K562 (cell line): ENCODE measurements at regions of chr3 and their contacts with region 1.

Region 1: DNA sequence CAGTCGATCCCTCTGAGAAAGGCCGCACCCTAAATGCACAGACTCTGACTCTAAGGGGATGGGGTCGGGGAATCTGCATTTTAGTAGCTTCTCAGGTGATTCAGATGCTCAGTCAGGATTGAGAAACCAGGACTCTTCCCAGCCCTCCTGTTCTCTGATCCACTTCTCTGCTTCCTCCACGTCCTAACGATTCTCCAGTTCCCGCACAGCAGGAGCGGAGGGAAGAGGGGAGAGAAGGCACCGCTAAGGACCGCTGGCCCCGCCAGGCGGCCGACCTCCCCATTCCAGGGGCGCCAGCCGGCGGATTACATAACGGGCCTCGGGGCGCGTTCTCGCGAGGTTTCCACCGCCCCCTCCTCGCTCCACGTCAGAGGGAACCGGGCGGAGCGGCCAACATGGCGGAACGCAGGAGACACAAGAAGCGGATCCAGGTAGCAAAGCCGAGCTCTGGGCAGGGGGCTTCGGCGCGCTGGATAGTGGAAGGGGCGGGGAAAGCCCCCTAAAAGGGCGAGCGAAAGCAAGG is at the start of gene SEC62:
- DNase-seq: peak; percentile 93 to 96 (median 94)
- ATAC-seq: peak; percentile 92
- H3K4me3 ChIP-seq: peak within 1 kb of the TSS; percentile 69
- H3K27ac ChIP-seq: peak within 1 kb of the TSS; percentile 84
- H3K4me1 ChIP-seq: peaks cover 4 to 12% of the 10 kb centered on the region in 2 experiments; a peak in 4 of 5 replicates
- H3K27me3 ChIP-seq: no peaks in the 10 kb centered on the region
- CTCF ChIP-seq: peak; percentile 67 to 73 (median 73)
- EP300 ChIP-seq: no peak; the same call in 1 of the 2 replicates
- POLR2A ChIP-seq: peak; percentile 89
- RAD21 ChIP-seq: peak; percentile 82 to 91
- polyA plus RNA-seq, gene SEC62: 118 to 152 TPM

Region 2: GRCh38 chr3:169149349-169149890 is 817.1 kb before region 1 on chr3:
- CTCF ChIA-PET with region 1: no interaction called
- POLR2A ChIA-PET with region 1: no interaction called
- in situ Hi-C with region 1: loop called (anchors 25 kb)
- intact Hi-C with region 1: no loop called
- DNase-seq: peak; percentile 73 to 89 (median 78)
- ATAC-seq: peak; percentile 65
- H3K4me3 ChIP-seq: peak overlapping the region; percentile 23
- H3K27ac ChIP-seq: peak overlapping the region; percentile 89
- H3K4me1 ChIP-seq: peaks cover 6 to 15% of the 10 kb centered on the region in 2 experiments; a peak in 4 of 5 replicates
- H3K27me3 ChIP-seq: no peaks in the 10 kb centered on the region; a peak in 1 of 5 replicates
- CTCF ChIP-seq: peak; percentile 82 to 92 (median 90)
- EP300 ChIP-seq: peak; percentile 23; the same call in 1 of the 2 replicates
- POLR2A ChIP-seq: no peak; the same call in 1 of the 2 replicates
- RAD21 ChIP-seq: peak; percentile 80 to 81

Region 3: DNA sequence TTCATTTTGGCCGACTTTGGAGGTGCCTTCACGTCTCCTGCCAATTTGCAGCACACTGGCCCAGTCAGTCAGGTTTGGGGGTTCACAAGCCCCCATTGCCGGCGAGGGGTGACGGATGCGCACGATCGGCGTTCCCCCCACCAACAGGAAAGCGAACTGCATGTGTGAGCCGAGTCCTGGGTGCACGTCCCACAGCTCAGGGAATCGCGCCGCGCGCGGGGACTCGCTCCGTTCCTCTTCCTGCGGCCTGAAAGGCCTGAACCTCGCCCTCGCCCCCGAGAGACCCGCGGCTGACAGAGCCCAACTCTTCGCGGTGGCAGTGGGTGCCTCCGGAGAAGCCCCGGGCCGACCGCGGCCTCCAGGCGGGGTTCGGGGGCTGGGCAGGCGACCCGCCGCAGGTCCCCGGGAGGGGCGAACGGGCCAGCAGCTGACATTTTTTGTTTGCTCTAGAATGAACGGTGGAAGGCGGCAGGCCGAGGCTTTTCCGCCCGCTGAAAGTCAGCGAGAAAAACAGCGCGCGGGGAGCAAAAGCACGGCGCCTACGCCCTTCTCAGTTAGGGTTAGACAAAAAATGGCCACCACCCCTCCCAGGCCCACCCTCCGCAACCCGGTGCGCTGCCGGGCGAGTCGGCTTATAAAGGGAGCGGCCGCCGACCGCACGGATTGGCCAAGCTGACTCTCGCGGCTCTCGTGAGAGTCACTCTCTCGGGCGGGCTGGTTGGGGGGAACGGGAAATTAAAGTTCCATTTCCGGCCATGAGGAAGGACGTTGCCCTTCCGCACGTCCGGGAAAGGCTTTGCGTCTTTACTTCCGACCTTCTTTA is 201.8 kb before region 1 on chr3 and contains the start of gene TERC:
- CTCF ChIA-PET with region 1: no interaction called
- POLR2A ChIA-PET with region 1: no interaction called
- in situ Hi-C with region 1: no loop called
- intact Hi-C with region 1: loop called (anchors 5 kb)
- DNase-seq: peak; percentile 74 to 93 (median 82)
- ATAC-seq: peak; percentile 96
- H3K4me3 ChIP-seq: peak within 1 kb of the TSS; percentile 71
- H3K27ac ChIP-seq: peak within 1 kb of the TSS; percentile 95
- H3K4me1 ChIP-seq: peaks cover 6 to 20% of the 10 kb centered on the region in 2 experiments
- H3K27me3 ChIP-seq: no peaks in the 10 kb centered on the region
- CTCF ChIP-seq: no peak
- EP300 ChIP-seq: no peak
- POLR2A ChIP-seq: peak; percentile 96
- RAD21 ChIP-seq: peak in 1 of 2 experiments; percentile 14; a peak in 1 of 4 replicates
- polyA plus RNA-seq, gene TERC: not detected

Region 4: DNA sequence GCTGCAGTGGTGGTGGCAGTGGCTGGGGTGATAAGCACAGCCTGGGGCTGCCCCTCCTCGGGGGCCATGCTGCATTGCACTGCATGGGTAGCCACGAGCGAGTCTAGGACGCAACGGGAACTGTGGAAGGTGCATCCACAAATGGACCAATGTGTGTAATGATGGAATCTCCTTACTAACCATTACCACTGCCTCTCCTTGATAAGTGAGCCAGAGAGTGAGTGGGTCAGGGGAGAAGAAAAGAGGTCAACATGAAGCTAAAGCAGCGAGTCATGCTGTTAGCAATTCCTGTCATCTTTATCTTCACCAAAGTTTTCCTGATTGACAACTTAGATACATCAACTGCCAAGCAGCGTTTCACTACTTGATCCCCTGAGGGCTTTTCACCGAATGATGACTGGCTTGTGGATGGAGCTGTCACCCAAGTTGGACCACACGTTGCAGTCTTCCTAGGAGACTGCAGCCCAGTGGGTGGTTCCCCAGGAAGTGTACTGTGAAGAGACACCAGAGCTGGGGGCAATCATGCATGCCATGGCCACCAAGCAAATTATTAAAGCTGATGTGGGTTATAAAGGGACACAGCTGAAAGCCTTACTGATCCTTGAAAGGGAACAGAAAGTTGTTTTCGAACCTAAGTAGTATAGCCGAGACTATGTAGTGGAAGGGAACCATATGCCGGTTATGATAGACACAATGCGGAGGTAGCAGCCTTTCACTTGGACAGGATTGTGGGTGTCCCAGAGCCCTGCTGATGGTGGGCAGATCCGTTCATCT is 34.6 kb before region 1 on chr3:
- CTCF ChIA-PET with region 1: no interaction called
- POLR2A ChIA-PET with region 1: no interaction called
- in situ Hi-C with region 1: no loop called
- intact Hi-C with region 1: loop called (anchors 2 kb)
- DNase-seq: peak in 2 of 4 experiments; percentile 42 to 64
- ATAC-seq: peak; percentile 63
- H3K4me3 ChIP-seq: no peak overlapping the region
- H3K27ac ChIP-seq: no peak overlapping the region
- H3K4me1 ChIP-seq: peaks cover 5 to 23% of the 10 kb centered on the region in 2 experiments
- H3K27me3 ChIP-seq: no peaks in the 10 kb centered on the region
- CTCF ChIP-seq: no peak
- EP300 ChIP-seq: peak; percentile 62
- POLR2A ChIP-seq: no peak
- RAD21 ChIP-seq: no peak

Region 5: DNA sequence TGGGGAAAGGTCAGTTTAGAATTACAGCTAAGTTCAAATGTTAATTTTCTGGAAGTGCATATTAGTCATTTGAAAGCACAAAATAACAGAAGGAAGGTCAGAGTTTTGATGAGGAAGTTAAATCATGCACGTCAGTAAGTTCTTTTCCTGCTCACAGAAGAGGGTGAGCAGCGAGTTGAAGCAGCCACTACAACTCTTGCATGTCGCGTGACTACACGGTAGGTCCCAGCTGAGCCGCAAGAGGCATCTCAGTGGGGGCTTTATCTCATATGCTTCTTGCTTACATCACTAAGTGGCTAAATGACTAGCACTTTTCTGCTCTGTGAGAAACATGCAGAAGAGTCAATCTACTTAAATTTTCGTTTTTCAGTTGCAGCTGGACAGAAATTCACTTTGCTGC is 21.2 kb before region 1 on chr3:
- CTCF ChIA-PET with region 1: no interaction called
- POLR2A ChIA-PET with region 1: interaction called, 8 read pairs
- in situ Hi-C with region 1: no loop called
- intact Hi-C with region 1: loop called (anchors 2 kb)
- DNase-seq: peak; percentile 16 to 83 (median 46)
- ATAC-seq: peak; percentile 96
- H3K4me3 ChIP-seq: no peak overlapping the region
- H3K27ac ChIP-seq: peak overlapping the region; percentile 2; the same call in 1 of the 3 replicates
- H3K4me1 ChIP-seq: peaks cover 4 to 27% of the 10 kb centered on the region in 2 experiments; a peak in 3 of 5 replicates
- H3K27me3 ChIP-seq: no peaks in the 10 kb centered on the region
- CTCF ChIP-seq: no peak
- EP300 ChIP-seq: peak; percentile 56
- POLR2A ChIP-seq: no peak
- RAD21 ChIP-seq: 0 out of 4 replicates have a peak, but pooled peaks of 1 of the 2 experiments have one; percentile 1

Region 6: GRCh38 chr3:169980055-169980454 is 13.6 kb after region 1 on chr3:
- CTCF ChIA-PET with region 1: no interaction called
- POLR2A ChIA-PET with region 1: interaction called, 34 read pairs
- in situ Hi-C with region 1: no loop called
- intact Hi-C with region 1: no loop called
- DNase-seq: no peak
- ATAC-seq: no peak
- H3K4me3 ChIP-seq: no peak overlapping the region
- H3K27ac ChIP-seq: no peak overlapping the region
- H3K4me1 ChIP-seq: no peaks in the 10 kb centered on the region
- H3K27me3 ChIP-seq: no peaks in the 10 kb centered on the region
- CTCF ChIP-seq: no peak
- EP300 ChIP-seq: no peak
- POLR2A ChIP-seq: no peak
- RAD21 ChIP-seq: no peak

Region 7: DNA sequence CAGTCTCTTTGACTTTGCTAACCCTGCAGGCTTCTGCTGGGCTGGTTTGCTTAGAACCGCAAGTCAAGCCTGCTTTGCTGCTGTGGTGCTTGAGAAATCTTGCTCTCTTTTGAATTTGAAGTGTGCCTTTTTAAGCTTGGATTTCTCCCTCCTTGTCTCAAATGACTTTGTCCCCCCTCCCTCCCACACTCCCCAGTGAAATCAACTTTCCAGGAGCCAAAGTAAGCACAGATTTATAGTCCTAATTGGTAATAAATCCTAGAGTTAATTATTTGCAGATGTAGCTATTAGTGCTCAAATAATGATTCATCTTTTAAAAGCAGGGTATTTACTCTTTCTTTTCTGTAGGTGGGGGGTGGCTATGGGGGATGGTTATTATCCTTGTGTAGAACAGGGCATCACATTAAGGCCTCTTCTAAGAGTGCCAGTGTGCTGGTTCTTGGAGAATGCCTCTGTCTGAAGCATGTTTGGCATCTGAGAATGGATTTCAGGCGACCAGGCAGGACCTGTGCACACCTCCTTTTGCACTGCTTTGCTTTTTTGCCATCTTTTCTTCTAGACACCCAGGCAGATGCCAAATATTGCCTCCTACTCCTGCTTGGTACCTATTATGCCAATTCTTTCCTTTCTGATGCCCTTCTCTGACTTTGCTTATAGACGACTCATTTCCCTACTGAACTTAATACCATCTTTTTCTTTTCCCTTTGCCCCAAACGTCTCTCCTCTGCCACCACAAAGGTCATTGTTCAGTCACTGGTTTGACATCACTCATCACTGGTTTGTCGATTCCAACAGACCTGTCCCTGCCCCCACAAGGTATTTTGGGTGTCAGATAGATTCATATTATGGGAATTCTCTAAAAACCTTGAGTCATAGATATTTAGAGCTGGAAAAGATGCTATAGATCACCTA is 502.9 kb after region 1 on chr3:
- CTCF ChIA-PET with region 1: no interaction called
- POLR2A ChIA-PET with region 1: no interaction called
- in situ Hi-C with region 1: no loop called
- intact Hi-C with region 1: no loop called
- DNase-seq: no peak
- ATAC-seq: no peak
- H3K4me3 ChIP-seq: no peak overlapping the region
- H3K27ac ChIP-seq: no peak overlapping the region
- H3K4me1 ChIP-seq: no peaks in the 10 kb centered on the region
- H3K27me3 ChIP-seq: peaks cover 15 to 21% of the 10 kb centered on the region in 2 experiments; a peak in 4 of 5 replicates
- CTCF ChIP-seq: no peak
- EP300 ChIP-seq: no peak
- POLR2A ChIP-seq: no peak
- RAD21 ChIP-seq: no peak